A549 (cell line): ENCODE measurements at regions of chr4 and their contacts with region 1.

Region 1: DNA sequence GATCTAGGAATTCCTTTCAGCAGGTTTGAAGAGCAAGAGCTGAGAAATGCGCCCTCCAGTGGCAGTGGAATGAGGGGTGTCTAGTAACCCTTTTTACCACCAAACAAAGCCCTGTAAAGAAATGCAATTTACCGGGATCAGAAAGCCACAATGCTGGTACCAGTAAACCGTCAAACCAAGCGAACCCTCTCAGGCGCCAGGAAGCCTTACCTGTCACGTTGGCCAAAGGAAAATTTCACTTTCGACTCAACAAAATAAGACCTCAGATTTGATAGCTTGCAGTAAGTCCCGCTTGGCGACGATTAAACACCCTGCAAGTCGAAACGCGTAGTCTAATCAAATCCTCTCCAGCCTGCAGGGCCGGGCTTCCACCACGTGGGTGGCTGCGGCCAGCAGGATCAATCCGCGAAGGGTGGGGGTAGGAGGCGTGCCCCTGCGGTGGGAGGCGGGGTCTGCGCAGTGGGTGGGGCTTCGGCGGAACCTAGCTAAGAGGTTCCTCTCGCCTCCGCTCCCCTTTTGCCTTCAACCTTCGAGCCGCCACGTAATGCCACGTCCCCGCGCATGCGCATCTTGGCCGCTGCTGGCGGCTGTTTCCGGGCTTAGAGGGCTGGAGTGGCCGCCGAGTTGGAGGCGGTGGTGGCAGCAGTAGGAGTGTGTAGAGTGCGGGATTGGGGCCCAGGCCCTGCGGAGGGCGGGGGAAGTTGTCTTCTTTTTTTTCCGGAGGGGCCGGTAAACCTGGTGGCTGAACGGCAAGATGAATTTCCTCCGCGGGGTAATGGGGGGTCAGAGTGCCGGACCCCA is at the start of gene USO1:
- DNase-seq: peak; percentile 62 to 98
- ATAC-seq: peak; percentile 89 to 92
- H3K4me3 ChIP-seq: peak within 1 kb of the TSS; percentile 68
- H3K27ac ChIP-seq: peak within 1 kb of the TSS; percentile 84 to 99
- H3K4me1 ChIP-seq: peaks cover 36% of the 10 kb centered on the region
- CTCF ChIP-seq: peak; percentile 75
- EP300 ChIP-seq: no peak
- POLR2A ChIP-seq: peak; percentile 65
- RAD21 ChIP-seq: peak; percentile 33 to 58; a peak in 4 of 5 replicates
- polyA plus RNA-seq, gene USO1: 75.6 and 97.6 TPM in 2 replicates

Region 2: DNA sequence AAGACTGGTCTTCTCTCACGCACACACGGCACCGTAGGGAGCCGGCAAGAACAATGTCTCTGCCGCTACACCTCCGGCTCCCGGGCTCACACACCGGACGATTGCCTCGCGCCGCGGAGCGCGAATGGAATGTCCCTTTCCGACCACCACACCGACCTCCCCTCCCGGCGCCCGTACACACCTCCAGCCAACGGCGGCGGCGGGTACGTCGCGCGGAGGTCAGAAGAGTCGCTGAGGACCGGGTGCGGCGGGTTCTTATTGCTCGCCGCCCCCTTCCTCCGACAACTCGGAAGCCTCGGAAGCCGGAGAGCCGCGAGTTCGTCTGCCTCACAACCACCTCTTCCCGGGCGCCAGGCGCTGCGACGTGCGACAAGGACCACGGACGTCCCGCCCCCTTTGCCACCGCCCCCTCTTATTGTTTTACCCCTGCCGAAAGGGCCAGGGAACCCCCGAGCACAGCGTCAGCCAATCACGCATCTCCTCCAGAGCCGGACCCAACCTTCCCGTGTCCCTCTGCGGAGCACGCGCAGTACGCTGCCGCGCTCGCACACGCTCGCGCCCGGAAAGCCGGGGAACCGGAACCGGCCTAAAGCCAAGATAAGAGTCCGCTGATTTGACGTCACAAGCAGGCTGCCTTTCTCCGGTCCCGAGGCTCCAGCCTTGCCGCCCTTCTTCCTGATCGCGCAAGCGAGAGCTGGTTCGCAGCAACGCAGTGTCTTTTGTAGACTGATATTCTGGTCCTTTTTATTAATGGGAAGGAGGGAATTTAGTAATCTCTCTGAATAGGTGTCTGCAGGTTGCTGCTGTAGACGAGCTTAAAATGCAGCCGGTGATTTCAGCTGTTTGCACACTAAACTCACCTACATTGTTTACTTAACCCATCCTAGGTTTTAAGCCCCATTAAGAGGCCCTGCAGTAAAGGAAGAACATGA is 51.0 kb before region 1 on chr4 and contains the start of gene G3BP2:
- CTCF ChIA-PET with region 1: interaction called, 15 read pairs
- POLR2A ChIA-PET with region 1: interaction called, 31 read pairs
- DNase-seq: peak; percentile 86 to 96
- ATAC-seq: peak; percentile 97 to 98
- H3K4me3 ChIP-seq: peak within 1 kb of the TSS; percentile 97
- H3K27ac ChIP-seq: peak within 1 kb of the TSS; percentile 93 to 97
- H3K4me1 ChIP-seq: peaks cover 27% of the 10 kb centered on the region
- CTCF ChIP-seq: no peak
- EP300 ChIP-seq: no peak
- POLR2A ChIP-seq: peak; percentile 59
- RAD21 ChIP-seq: no peak
- polyA plus RNA-seq, gene G3BP2: 148 and 179 TPM in 2 replicates

Region 3: DNA sequence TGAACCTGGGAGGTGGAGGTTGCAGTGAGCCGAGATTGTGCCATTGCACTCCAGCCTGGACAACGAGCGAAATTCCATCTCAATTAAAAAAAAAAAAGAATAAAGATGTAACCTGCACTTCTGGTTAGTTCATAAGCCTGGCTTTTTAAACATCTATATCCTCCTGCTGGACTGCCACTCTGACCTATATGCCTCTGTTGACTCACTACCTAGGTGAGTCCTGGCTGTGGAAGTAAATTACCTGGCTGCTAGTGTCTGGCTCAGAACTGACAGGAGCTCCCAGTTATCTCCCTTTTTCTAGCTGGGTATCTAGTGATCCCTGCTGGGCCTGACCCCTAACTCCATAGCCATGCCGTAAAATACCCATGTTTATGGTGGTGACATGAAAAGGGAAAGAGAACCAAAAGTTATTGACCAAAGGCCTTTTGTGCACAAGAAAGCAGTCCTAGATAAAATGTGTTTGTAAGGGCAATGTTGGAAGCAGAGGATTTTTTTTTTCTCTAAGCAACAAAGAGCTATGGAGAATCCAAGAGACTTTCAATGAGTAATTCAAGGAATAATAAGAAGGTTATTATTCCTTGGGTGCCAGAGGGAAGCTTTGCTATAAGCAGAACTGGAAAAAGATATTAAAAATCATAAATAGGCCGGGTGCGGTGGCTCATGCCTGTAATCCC is 40.6 kb before region 1 on chr4:
- CTCF ChIA-PET with region 1: interaction called, 12 read pairs
- POLR2A ChIA-PET with region 1: interaction called, 3 read pairs
- DNase-seq: no peak
- ATAC-seq: no peak
- H3K4me3 ChIP-seq: no peak overlapping the region
- H3K27ac ChIP-seq: no peak overlapping the region
- H3K4me1 ChIP-seq: no peaks in the 10 kb centered on the region
- CTCF ChIP-seq: no peak
- EP300 ChIP-seq: no peak
- POLR2A ChIP-seq: no peak
- RAD21 ChIP-seq: no peak

Region 4: DNA sequence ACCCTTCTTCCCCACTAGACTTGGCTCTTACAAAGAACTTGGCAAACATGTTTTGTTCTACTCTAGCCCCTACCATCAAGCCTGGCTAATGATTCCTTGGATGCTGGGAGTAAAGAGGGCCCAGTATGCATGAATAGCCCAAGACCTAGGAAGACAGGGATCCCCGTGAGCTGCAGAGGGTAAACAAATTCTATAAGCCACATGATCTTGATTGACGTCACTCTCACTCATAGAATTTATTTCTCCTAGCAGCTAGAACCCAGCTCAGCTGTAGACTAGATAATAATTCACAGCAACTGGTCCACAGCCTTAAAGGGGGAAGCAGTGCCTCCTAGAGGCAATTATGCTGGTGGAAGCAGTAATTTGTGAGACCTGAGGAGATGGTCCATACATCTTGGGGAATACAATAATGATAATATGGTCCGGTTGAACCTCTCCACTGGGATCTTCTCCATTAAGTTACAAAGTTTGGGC is 16.0 kb before region 1 on chr4:
- CTCF ChIA-PET with region 1: interaction called, 16 read pairs
- POLR2A ChIA-PET with region 1: interaction called, 18 read pairs
- DNase-seq: peak in 1 of 2 experiments; percentile 50
- ATAC-seq: peak; percentile 34 to 82; a peak in 4 of 6 replicates
- H3K4me3 ChIP-seq: no peak overlapping the region
- H3K27ac ChIP-seq: no peak overlapping the region
- H3K4me1 ChIP-seq: peaks cover 18% of the 10 kb centered on the region
- CTCF ChIP-seq: peak; percentile 28; the same call in 2 of the 3 replicates
- EP300 ChIP-seq: no peak
- POLR2A ChIP-seq: no peak
- RAD21 ChIP-seq: peak in 1 of 2 experiments; percentile 31; a peak in 1 of 5 replicates

Region 5: DNA sequence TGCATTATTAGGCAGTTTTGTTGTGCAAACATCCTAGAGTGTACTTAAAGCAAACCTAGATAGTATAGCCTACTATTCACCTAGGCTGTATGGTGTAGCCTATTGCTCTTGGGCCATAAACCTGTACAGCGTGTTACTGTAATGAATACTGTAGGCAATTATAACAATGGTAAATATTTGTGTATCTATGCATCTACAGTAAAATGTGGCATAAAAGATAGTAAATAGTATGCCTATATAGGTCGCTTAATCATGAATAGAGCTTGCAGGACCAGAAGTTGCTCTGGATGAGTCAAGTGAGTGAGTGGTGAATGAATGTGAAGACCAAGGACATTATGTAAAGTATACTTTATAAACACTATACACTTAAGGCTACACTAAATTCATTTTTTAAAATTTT is 16.8 kb after region 1 on chr4:
- CTCF ChIA-PET with region 1: interaction called, 3 read pairs
- POLR2A ChIA-PET with region 1: interaction called, 15 read pairs
- DNase-seq: no peak
- ATAC-seq: 0 out of 6 replicates have a peak, but pooled peaks of 1 of the 2 experiments have one; percentile 30
- H3K4me3 ChIP-seq: no peak overlapping the region
- H3K27ac ChIP-seq: no peak overlapping the region
- H3K4me1 ChIP-seq: peaks cover 32% of the 10 kb centered on the region
- CTCF ChIP-seq: no peak
- EP300 ChIP-seq: no peak
- POLR2A ChIP-seq: no peak
- RAD21 ChIP-seq: no peak

Region 6: GRCh38 chr4:75844151-75844662 is 119.9 kb after region 1 on chr4:
- CTCF ChIA-PET with region 1: interaction called, 12 read pairs
- POLR2A ChIA-PET with region 1: interaction called, 23 read pairs
- DNase-seq: peak; percentile 29 to 91
- ATAC-seq: peak; percentile 79 to 80
- H3K4me3 ChIP-seq: no peak overlapping the region
- H3K27ac ChIP-seq: peak overlapping the region; percentile 91 to 98
- H3K4me1 ChIP-seq: peaks cover 72% of the 10 kb centered on the region
- CTCF ChIP-seq: no peak
- EP300 ChIP-seq: peak; percentile 51 to 82; a peak in 3 of 5 replicates
- POLR2A ChIP-seq: no peak
- RAD21 ChIP-seq: 0 out of 5 replicates have a peak, but pooled peaks of 1 of the 2 experiments have one; percentile 15